Tibial artery (tissue), 4 donors: ENCODE measurements at regions of chr9 and their contacts with region 1.

Region 1: GRCh38 chr9:127205183-127205470 is 59.4 kb upstream of the GARNL3 start:
- DNase-seq: no peak
- H3K4me3 ChIP-seq: no peak overlapping the region
- H3K27ac ChIP-seq: no peak overlapping the region
- H3K4me1 ChIP-seq: no peaks in the 10 kb centered on the region
- H3K27me3 ChIP-seq: no peaks in the 10 kb centered on the region
- CTCF ChIP-seq: peak; percentile 28 to 46

Region 2: GRCh38 chr9:126962336-126962735 is 242.8 kb before region 1 on chr9:
- intact Hi-C with region 1: loop called (anchors 5 kb)
- DNase-seq: no peak
- H3K4me3 ChIP-seq: no peak overlapping the region
- H3K27ac ChIP-seq: peak overlapping the region in 1 of 2 donors; percentile 12
- H3K4me1 ChIP-seq: peaks cover 0 to 23% (median 5%) of the 10 kb centered on the region in 4 donors
- H3K27me3 ChIP-seq: no peaks in the 10 kb centered on the region
- CTCF ChIP-seq: no peak